ENCODE measurements at regions of chr14 and their contacts with region 1.

Region 1: GRCh38 chr14:52131640-52132320 is 62.9 kb upstream of the NID2 start:
- DNase-seq: peak in 8 of 9 experiments; percentile 16 to 81 (median 40)
- ATAC-seq: peak; percentile 23
- H3K4me3 ChIP-seq: no peak overlapping the region
- H3K4me3 Mint-ChIP-seq: no peak overlapping the region
- H3K27ac ChIP-seq: no peak overlapping the region
- H3K27ac Mint-ChIP-seq: no peak overlapping the region
- H3K4me1 ChIP-seq: peaks cover 10% of the 10 kb centered on the region
- H3K4me1 Mint-ChIP-seq: peaks cover 12% of the 10 kb centered on the region
- H3K27me3 ChIP-seq: peaks cover 0 to 3% of the 10 kb centered on the region in 2 experiments
- H3K27me3 Mint-ChIP-seq: no peaks in the 10 kb centered on the region
- CTCF ChIP-seq: peak; percentile 30

Region 2: GRCh38 chr14:51283402-51284085 is 848.2 kb before region 1 on chr14:
- CTCF ChIA-PET with region 1: no interaction called
- POLR2A ChIA-PET with region 1: no interaction called
- intact Hi-C with region 1: loop called in 1 of 2 experiments (anchors 5 kb)
- DNase-seq: peak in 2 of 9 experiments; percentile 48 to 64
- ATAC-seq: no peak
- H3K4me3 ChIP-seq: no peak overlapping the region
- H3K4me3 Mint-ChIP-seq: no peak overlapping the region
- H3K27ac ChIP-seq: no peak overlapping the region
- H3K27ac Mint-ChIP-seq: no peak overlapping the region
- H3K4me1 ChIP-seq: no peaks in the 10 kb centered on the region
- H3K4me1 Mint-ChIP-seq: no peaks in the 10 kb centered on the region
- H3K27me3 ChIP-seq: no peaks in the 10 kb centered on the region
- H3K27me3 Mint-ChIP-seq: no peaks in the 10 kb centered on the region
- CTCF ChIP-seq: peak; percentile 75

Region 3: GRCh38 chr14:51860164-51860824 is 271.5 kb before region 1 on chr14 and contains the start of gene GNG2:
- CTCF ChIA-PET with region 1: no interaction called
- POLR2A ChIA-PET with region 1: no interaction called
- intact Hi-C with region 1: no loop called
- DNase-seq: peak; percentile 71 to 94 (median 83)
- ATAC-seq: peak; percentile 95
- H3K4me3 ChIP-seq: peak within 1 kb of the TSS; percentile 86 to 90
- H3K4me3 Mint-ChIP-seq: peak within 1 kb of the TSS; percentile 98
- H3K27ac ChIP-seq: peak within 1 kb of the TSS; percentile 88
- H3K27ac Mint-ChIP-seq: peak within 1 kb of the TSS; percentile 95
- H3K4me1 ChIP-seq: peaks cover 50% of the 10 kb centered on the region
- H3K4me1 Mint-ChIP-seq: peaks cover 66% of the 10 kb centered on the region
- H3K27me3 ChIP-seq: no peaks in the 10 kb centered on the region
- H3K27me3 Mint-ChIP-seq: no peaks in the 10 kb centered on the region
- CTCF ChIP-seq: no peak
- total RNA-seq, gene GNG2: 166 to 169 TPM

Region 4: DNA sequence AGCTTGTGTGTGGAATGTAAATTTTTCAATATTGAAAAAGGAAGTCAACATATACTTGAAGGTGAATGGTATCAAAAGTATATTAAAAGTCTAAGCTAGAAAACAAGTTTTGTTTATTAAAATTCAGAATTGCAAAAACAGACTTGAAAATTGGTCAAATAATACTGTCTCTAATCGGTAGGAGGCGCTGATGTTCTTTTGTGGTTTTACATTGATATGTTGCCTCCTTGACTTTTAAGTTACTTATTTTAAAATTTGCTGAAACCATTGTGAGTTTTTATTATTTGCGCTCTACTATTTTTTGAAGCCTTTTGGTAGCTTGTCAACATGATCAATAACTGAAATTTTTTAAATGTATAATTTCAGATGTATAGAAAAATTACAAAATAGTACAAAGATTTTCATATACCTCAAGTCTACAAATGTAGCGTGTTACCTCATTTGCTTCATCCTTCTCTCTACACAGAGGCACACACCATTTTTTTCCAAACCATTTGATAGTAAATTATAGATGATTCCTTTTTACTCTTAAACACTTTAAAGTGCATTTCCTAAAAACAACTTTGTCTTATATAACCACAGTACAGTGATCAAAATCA is 135.5 kb before region 1 on chr14:
- CTCF ChIA-PET with region 1: interaction called, 5 read pairs
- POLR2A ChIA-PET with region 1: no interaction called
- intact Hi-C with region 1: loop called in 1 of 2 experiments (anchors 1 kb)
- DNase-seq: peak in 2 of 9 experiments; percentile 58 to 68
- ATAC-seq: peak; percentile 52
- H3K4me3 ChIP-seq: no peak overlapping the region
- H3K4me3 Mint-ChIP-seq: no peak overlapping the region
- H3K27ac ChIP-seq: no peak overlapping the region
- H3K27ac Mint-ChIP-seq: no peak overlapping the region
- H3K4me1 ChIP-seq: no peaks in the 10 kb centered on the region
- H3K4me1 Mint-ChIP-seq: peaks cover 38% of the 10 kb centered on the region
- H3K27me3 ChIP-seq: no peaks in the 10 kb centered on the region
- H3K27me3 Mint-ChIP-seq: no peaks in the 10 kb centered on the region
- CTCF ChIP-seq: peak; percentile 78

Region 5: GRCh38 chr14:52338051-52338681 is 206.4 kb after region 1 on chr14:
- CTCF ChIA-PET with region 1: no interaction called
- POLR2A ChIA-PET with region 1: no interaction called
- intact Hi-C with region 1: no loop called
- DNase-seq: no peak
- ATAC-seq: no peak
- H3K4me3 ChIP-seq: no peak overlapping the region
- H3K4me3 Mint-ChIP-seq: no peak overlapping the region
- H3K27ac ChIP-seq: no peak overlapping the region
- H3K27ac Mint-ChIP-seq: no peak overlapping the region
- H3K4me1 ChIP-seq: no peaks in the 10 kb centered on the region
- H3K4me1 Mint-ChIP-seq: peaks cover 14% of the 10 kb centered on the region
- H3K27me3 ChIP-seq: no peaks in the 10 kb centered on the region
- H3K27me3 Mint-ChIP-seq: no peaks in the 10 kb centered on the region
- CTCF ChIP-seq: no peak

Region 6: DNA sequence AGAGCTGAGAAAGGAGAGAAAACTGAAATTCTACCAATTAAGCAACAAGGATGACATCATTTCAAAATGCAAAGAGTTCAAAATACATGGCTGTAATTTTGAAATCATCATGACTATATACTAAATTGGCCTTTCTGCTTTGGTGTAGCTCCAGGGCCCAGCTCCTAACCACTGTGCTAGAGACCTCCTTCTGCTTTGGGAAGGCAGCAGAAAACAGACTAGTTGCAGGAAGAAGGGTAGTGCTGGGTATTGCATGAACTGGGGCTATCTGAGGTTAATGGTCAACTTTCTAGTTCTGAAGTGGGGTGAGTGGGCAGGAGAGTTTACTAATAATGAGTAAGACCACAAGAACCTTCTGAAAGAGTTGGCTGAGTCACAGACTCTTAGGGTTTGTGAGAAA is 248.5 kb after region 1 on chr14:
- CTCF ChIA-PET with region 1: no interaction called
- POLR2A ChIA-PET with region 1: no interaction called
- intact Hi-C with region 1: no loop called
- DNase-seq: no peak
- ATAC-seq: no peak
- H3K4me3 ChIP-seq: no peak overlapping the region
- H3K4me3 Mint-ChIP-seq: no peak overlapping the region
- H3K27ac ChIP-seq: no peak overlapping the region
- H3K27ac Mint-ChIP-seq: no peak overlapping the region
- H3K4me1 ChIP-seq: peaks cover 7% of the 10 kb centered on the region
- H3K4me1 Mint-ChIP-seq: peaks cover 5% of the 10 kb centered on the region
- H3K27me3 ChIP-seq: no peaks in the 10 kb centered on the region
- H3K27me3 Mint-ChIP-seq: no peaks in the 10 kb centered on the region
- CTCF ChIP-seq: no peak

Measured in CD8-positive, alpha-beta T cell (primary cell).